Heart right ventricle (tissue), 16 donors: ENCODE measurements at regions of chr4 and their contacts with region 1.

Region 1: GRCh38 chr4:6327041-6327917 is 57.6 kb downstream of the WFS1 start:
- DNase-seq: peak; percentile 73 to 84
- ATAC-seq: peak; percentile 61 to 85 (median 71)
- H3K4me3 ChIP-seq: no peak overlapping the region
- H3K27ac ChIP-seq: no peak overlapping the region
- H3K4me1 ChIP-seq: peaks cover 0 to 23% (median 5%) of the 10 kb centered on the region in 9 donors
- H3K27me3 ChIP-seq: peaks cover 0 to 18% (median 9%) of the 10 kb centered on the region in 7 donors
- CTCF ChIP-seq: peak; percentile 94 to 99 (median 95)

Region 2: DNA sequence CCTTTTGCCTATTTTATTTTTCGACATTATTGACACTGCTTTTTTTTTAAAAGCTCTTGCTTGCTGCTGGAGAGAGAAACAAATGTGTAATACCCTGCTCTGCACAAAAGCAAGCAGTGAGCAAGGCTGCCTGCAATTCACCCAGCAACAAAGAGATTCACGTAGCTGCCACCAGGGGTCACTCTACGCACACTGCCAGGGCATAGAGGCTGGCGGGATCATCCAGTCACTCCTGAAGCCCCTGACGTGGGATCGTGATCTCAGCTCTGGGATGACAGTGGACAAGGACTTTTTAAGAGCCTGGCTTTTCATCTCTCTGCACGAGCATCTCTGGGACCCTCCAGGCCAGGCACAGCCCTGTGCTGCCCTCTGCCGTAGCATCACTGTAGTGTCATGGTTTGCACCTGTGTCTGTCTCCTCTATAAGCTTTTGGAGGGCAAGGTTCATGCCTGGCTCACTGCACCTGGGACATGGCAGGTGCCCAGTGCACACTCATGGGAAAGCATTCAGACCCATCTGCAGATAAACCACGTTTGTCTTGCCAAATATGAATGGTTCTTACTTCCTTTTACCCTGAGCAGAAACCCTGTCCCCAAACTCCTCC is 328.8 kb before region 1 on chr4:
- intact Hi-C with region 1: loop called in 4 of 10 experiments (anchors 5 to 10 kb)
- DNase-seq: peak; percentile 30 to 36
- ATAC-seq: peak; percentile 49 to 77 (median 72)
- H3K4me3 ChIP-seq: no peak overlapping the region
- H3K27ac ChIP-seq: no peak overlapping the region
- H3K4me1 ChIP-seq: no peaks in the 10 kb centered on the region
- H3K27me3 ChIP-seq: peaks cover 6 to 53% (median 37%) of the 10 kb centered on the region in 7 donors
- CTCF ChIP-seq: peak; percentile 75 to 93 (median 90)

Region 3: GRCh38 chr4:6250235-6250983 is 76.9 kb before region 1 on chr4:
- intact Hi-C with region 1: loop called in 8 of 10 experiments (anchors 1 to 5 kb)
- DNase-seq: peak in 1 of 2 donors; percentile 38
- ATAC-seq: peak in 6 of 8 donors; percentile 28 to 65 (median 43)
- H3K4me3 ChIP-seq: no peak overlapping the region
- H3K27ac ChIP-seq: no peak overlapping the region
- H3K4me1 ChIP-seq: peaks cover 0 to 7% (median 2%) of the 10 kb centered on the region in 9 donors
- H3K27me3 ChIP-seq: peaks cover 0 to 49% (median 41%) of the 10 kb centered on the region in 7 donors
- CTCF ChIP-seq: peak; percentile 73 to 87 (median 83)

Region 4: GRCh38 chr4:6264225-6264540 is 63.1 kb before region 1 on chr4:
- intact Hi-C with region 1: loop called in 7 of 10 experiments (anchors 1 to 5 kb)
- DNase-seq: peak; percentile 38 to 51
- ATAC-seq: peak; percentile 53 to 89 (median 72)
- H3K4me3 ChIP-seq: no peak overlapping the region
- H3K27ac ChIP-seq: no peak overlapping the region
- H3K4me1 ChIP-seq: peaks cover 0 to 9% (median 4%) of the 10 kb centered on the region in 9 donors
- H3K27me3 ChIP-seq: peaks cover 0 to 11% (median 3%) of the 10 kb centered on the region in 7 donors
- CTCF ChIP-seq: peak; percentile 36 to 78 (median 66)

Region 5: DNA sequence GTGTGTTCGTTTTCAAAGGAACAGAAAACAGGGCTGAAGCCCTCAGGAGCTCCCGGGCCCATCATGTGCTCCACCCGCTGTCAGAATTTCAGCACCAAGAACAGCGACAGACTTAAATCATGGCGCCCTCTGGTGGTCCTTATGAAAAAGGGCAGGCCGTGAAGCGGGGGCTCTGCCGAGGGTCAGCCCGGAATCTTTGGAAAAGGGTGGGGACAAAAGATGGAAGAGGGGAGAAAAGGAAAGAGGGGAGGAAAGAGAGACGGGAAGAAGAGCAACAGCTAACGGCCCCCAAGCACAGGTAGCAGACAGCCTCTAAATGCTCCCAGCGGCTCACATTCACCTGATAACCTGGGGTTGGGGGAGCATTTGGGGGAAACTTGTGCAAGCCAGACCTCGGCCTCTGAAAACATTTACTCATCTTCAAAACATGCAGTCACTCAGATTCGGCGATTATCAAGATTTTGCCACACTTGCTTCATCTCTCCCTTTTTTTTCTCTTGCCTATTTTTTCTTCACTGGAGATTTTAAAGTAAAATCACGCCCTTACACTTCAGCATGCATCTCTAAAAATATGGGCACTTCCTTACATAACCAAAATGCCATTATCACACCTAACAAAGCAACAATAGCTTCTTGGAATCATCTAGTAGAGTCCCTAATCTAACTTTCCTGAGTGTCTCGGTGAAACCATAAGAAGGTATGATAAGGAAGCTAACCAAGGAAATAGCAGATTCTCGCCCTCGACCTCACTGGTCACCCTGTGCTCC is 219.6 kb after region 1 on chr4:
- intact Hi-C with region 1: loop called in 8 of 10 experiments (anchors 2 to 10 kb)
- DNase-seq: peak in 1 of 2 donors; percentile 36
- ATAC-seq: peak in 6 of 8 donors; percentile 19 to 56 (median 45)
- H3K4me3 ChIP-seq: no peak overlapping the region
- H3K27ac ChIP-seq: no peak overlapping the region
- H3K4me1 ChIP-seq: peaks cover 0 to 11% (median 0%) of the 10 kb centered on the region in 9 donors
- H3K27me3 ChIP-seq: peaks cover 0 to 13% (median 2%) of the 10 kb centered on the region in 7 donors
- CTCF ChIP-seq: peak; percentile 52 to 95 (median 84)